Cardiac septum (tissue), 1 donor: ENCODE measurements at regions of chr2 and their contacts with region 1.

Region 1: GRCh38 chr2:27071277-27071989 is at the start of gene OST4:
- DNase-seq: peak; percentile 98
- total RNA-seq, gene OST4: 339 TPM

Region 2: GRCh38 chr2:27032495-27033252 is 38.8 kb before region 1 on chr2 and contains the start of gene TMEM214:
- intact Hi-C with region 1: loop called (anchors 5 kb)
- DNase-seq: peak; percentile 96
- total RNA-seq, gene TMEM214: 40.3 TPM

Region 3: DNA sequence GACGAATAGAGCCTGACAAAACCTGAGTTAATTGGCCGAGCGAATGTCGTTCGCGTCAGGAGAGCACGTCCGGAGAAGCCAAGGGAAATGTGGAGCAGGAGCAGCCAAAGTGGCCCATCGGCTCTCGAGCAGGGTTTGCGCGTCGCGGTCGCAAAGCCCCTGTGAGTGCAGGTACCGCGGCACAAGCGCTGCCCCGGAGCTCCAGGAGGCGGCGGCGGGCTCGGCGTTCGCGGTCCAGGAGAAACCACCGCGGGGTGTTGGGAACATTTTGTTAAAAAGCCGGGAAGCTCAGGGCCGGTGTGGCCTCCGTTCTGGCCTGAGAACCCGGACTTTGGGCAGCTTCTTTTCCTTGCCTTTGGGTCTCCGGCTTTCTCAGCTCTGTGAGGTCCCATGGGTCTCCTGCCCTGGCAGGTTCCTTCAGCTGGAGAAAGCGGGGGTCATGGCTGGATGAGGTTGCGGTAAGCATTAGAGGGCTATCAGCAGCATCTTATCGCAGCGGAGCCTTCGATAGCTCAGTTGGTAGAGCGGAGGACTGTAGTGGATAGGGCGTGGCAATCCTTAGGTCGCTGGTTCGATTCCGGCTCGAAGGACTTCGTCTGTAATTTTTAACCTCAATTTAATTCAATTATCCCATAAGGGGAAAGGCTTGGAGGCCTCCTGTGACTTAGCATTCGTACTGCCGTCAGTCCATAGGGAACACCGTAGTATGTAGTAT is 21.0 kb before region 1 on chr2:
- intact Hi-C with region 1: loop called (anchors 2 kb)
- DNase-seq: peak; percentile 92